Mammary epithelial cell (primary cell): ENCODE measurements at regions of chr5 and their contacts with region 1.

Region 1: DNA sequence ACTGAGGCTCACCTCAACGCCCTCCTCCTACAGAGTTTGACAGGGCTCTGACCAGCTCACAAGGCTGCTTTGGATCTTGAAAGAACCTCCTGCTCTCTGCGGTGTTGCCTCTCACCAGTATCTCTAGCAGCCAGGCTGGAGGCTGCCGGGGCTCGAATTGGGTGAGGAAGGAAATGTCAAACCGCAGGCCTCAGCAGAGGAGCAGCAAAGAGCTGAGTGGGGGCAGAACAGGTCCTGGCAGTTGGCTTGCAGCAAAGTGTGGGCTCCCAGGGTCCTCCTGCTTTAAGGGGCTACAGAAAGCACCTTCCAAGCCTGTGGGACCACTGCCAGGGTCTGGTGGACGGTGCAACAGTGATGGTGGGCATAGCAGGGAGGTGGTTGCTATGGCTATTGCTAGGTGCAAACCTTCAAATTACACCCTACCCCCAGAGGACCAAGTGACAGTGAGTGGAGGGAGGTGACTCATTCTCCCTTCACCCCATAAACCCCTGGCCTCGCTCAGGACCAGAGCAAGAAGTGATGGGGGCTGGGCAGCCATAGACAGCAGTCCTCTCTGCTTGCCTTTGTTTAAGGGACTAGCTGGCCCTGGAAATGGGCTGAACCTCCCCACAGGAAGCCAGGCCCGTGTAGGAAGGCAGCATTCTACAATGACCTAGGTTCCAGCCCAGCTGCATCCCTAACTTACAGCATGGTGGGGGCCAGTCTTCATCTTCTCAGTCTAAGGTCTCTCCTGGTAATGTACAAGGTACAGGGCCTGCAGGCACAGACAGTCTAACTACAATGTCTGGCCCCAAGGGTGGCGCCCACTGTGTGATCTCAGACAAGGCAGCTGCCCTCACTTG is 18.7 kb downstream of the LCP2 start:
- DNase-seq: no peak
- H3K4me3 ChIP-seq: no peak overlapping the region
- H3K27ac ChIP-seq: no peak overlapping the region
- H3K4me1 ChIP-seq: no peaks in the 10 kb centered on the region
- H3K27me3 ChIP-seq: peaks cover 4% of the 10 kb centered on the region
- CTCF ChIP-seq: no peak

Region 2: DNA sequence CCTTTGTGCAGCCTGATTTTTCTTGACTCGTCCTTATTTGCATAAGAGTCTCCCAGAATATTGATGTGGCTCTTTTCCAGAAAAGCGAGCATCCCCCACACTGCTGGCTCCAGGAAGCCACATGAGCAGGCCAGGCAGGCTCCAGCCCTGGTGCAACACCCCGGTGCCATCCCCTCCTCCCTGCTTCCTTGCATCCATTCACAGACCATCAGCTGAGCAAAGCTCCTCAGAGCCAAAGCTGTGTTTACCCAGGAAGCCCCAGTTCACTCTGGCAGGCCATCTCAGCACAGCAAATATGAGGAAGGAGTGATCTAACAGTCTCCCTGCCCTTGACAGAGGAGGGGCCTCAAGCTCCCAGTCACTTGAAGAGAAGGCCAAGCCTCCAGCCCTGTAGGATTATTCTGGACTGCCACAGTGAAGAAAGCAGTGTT is 333.0 kb before region 1 on chr5:
- CTCF ChIA-PET with region 1: no interaction called
- dilution Hi-C with region 1: no loop called
- in situ Hi-C with region 1: no loop called
- intact Hi-C with region 1: no loop called
- DNase-seq: peak; percentile 34
- H3K4me3 ChIP-seq: no peak overlapping the region
- H3K27ac ChIP-seq: peak overlapping the region; percentile 28
- H3K4me1 ChIP-seq: peaks cover 37% of the 10 kb centered on the region
- H3K27me3 ChIP-seq: no peaks in the 10 kb centered on the region
- CTCF ChIP-seq: no peak

Region 3: DNA sequence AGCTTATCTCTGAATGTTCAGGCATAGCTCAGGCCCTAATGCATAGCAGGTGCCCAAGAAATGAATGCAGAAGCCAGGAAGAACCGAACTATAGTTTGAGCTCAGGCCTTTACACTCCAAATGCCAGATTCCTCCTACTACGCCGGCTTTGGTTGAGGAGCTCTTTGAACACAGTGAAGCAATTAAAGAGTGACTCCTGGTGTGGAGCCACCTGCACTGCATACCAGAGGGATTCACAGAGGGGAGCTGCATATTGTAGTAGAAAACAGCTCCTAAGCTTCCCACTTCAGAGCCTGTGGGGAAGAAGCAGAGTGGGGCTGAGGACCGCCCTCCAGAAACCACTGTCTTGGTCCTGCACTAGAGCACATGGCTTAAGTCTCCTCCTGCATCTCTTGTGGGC is 124.8 kb after region 1 on chr5:
- CTCF ChIA-PET with region 1: interaction called, 36 read pairs
- dilution Hi-C with region 1: no loop called
- in situ Hi-C with region 1: no loop called
- intact Hi-C with region 1: no loop called
- DNase-seq: no peak
- H3K4me3 ChIP-seq: no peak overlapping the region
- H3K27ac ChIP-seq: no peak overlapping the region
- H3K4me1 ChIP-seq: no peaks in the 10 kb centered on the region
- H3K27me3 ChIP-seq: no peaks in the 10 kb centered on the region
- CTCF ChIP-seq: no peak

Region 4: DNA sequence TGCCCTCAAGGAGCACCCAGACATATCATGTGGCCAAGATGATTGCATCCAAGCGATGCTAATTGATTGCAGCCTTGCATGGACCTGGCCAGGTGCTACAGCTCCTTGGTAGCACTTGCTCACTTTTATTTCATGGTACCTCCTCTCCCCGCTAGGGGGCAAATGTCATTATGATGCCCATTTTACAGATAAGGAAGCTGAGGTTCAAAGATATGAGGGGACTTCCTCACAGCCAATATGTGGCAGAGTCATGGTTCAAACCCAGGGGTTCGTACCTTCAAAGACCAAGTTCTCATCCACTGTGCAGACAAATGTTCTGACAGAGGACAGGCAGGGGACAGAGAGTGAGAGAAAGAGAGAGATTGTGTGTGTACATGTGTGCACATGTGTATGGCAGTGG is 132.3 kb after region 1 on chr5:
- CTCF ChIA-PET with region 1: no interaction called
- dilution Hi-C with region 1: no loop called
- in situ Hi-C with region 1: loop called in 1 of 2 experiments (anchors 10 kb)
- intact Hi-C with region 1: no loop called
- DNase-seq: no peak
- H3K4me3 ChIP-seq: no peak overlapping the region
- H3K27ac ChIP-seq: no peak overlapping the region
- H3K4me1 ChIP-seq: no peaks in the 10 kb centered on the region
- H3K27me3 ChIP-seq: no peaks in the 10 kb centered on the region
- CTCF ChIP-seq: no peak

Region 5: DNA sequence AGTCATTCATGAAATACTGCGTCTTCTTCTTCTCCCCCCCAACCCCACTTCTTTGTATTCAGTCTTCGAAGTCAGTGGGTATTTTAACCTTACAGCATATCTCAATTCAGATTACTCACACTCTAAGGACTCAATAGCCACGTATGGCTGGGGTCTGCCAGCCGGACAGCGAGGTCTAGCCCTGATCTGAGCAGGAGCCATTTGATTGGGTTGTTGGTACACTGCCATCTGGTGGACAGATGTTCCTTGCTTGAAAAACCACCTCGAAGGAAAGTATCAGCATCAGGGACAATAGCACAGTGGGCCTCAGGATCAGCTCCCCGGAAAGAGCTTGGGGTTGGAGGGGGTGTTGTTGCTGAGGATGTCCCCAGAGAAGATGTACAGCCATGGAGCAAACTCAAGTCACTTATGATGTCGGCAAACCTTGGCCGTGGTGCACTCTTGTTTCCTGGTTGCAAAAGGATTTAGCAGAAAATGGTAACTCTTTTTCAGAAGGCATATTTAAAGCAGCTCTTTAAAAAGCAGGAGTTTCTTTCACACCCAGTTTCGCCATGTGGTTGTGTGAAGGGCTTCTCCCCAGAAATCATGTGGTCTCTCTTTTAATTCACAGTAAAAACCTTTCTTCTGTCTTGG is 142.1 kb after region 1 on chr5:
- CTCF ChIA-PET with region 1: no interaction called
- dilution Hi-C with region 1: no loop called
- in situ Hi-C with region 1: loop called in 1 of 2 experiments (anchors 10 kb)
- intact Hi-C with region 1: loop called (anchors 1 kb)
- DNase-seq: peak; percentile 34
- H3K4me3 ChIP-seq: no peak overlapping the region
- H3K27ac ChIP-seq: no peak overlapping the region
- H3K4me1 ChIP-seq: no peaks in the 10 kb centered on the region
- H3K27me3 ChIP-seq: no peaks in the 10 kb centered on the region
- CTCF ChIP-seq: peak; percentile 64 to 78